Esophagus squamous epithelium (tissue), 5 donors: ENCODE measurements at regions of chr14 and their contacts with region 1.

Region 1: GRCh38 chr14:103546652-103547454 is 15.6 kb downstream of the BAG5 start:
- DNase-seq: no peak
- H3K4me3 ChIP-seq: no peak overlapping the region
- H3K27ac ChIP-seq: no peak overlapping the region
- H3K4me1 ChIP-seq: peaks cover 57 to 85% (median 62%) of the 10 kb centered on the region in 3 donors
- H3K27me3 ChIP-seq: no peaks in the 10 kb centered on the region
- CTCF ChIP-seq: peak; percentile 77 to 90 (median 84)
- POLR2A ChIP-seq: no peak

Region 2: DNA sequence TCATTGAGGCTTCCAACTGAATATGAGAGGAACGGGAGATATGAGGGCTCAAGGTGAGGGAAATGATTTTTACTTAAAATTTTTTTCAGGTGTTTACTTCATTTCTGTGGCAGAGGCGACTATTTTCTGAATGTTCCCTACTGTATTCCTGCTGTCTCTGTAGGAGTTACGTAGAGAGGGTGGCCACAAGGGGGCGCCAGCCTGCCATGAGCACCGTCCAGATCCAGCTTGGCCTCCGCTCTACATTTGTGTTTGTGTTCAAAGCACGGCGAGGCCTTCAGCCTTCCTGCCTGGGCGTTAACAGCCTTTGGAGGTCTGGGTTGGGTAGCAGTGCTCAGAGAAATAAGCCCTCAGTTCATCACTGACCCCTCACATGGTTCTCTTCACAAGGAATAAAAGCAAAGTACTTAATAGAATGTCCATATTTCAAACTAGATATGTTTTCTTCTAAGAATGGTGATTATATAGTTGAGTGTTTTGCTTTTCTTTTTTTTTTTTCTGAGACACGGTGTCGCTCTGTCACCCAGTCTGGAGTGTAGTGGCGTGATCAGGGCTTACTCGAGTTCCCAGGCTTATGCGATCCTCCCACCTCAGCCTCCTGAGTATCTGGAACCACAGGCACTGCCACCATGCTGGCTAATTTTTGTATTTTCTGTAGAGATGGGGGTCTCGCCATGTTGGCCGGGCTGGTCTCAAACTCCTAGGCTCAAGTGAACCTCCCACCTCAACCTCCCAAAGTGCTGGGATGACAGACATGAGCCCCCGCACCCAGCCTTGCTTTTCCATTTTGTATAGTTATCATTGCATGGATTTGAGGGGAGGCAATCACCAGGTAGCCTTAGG is 46.5 kb before region 1 on chr14:
- intact Hi-C with region 1: loop called (anchors 5 kb)
- DNase-seq: no peak
- H3K4me3 ChIP-seq: no peak overlapping the region
- H3K27ac ChIP-seq: peak overlapping the region in 3 of 4 donors; percentile 1 to 53 (median 41)
- H3K4me1 ChIP-seq: peaks cover 0 to 20% (median 0%) of the 10 kb centered on the region in 3 donors
- H3K27me3 ChIP-seq: no peaks in the 10 kb centered on the region
- CTCF ChIP-seq: peak; percentile 82 to 95 (median 90)
- POLR2A ChIP-seq: no peak